ENCODE measurements at regions of chr16 and their contacts with region 1.

Region 1: GRCh38 chr16:19167710-19168370 is at the start of gene SYT17:
- DNase-seq: peak; percentile 36
- H3K4me3 Mint-ChIP-seq: no peak within 1 kb of the TSS
- H3K27ac Mint-ChIP-seq: no peak within 1 kb of the TSS
- H3K4me1 Mint-ChIP-seq: no peaks in the 10 kb centered on the region
- H3K27me3 Mint-ChIP-seq: peaks cover 9% of the 10 kb centered on the region
- total RNA-seq, gene SYT17: not detected

Region 2: GRCh38 chr16:19223235-19224170 is 55.7 kb after region 1 on chr16:
- CTCF ChIA-PET with region 1: no interaction called
- intact Hi-C with region 1: no loop called
- DNase-seq: peak; percentile 69
- H3K4me3 Mint-ChIP-seq: no peak overlapping the region
- H3K27ac Mint-ChIP-seq: no peak overlapping the region
- H3K4me1 Mint-ChIP-seq: no peaks in the 10 kb centered on the region
- H3K27me3 Mint-ChIP-seq: peaks cover 5% of the 10 kb centered on the region

Region 3: DNA sequence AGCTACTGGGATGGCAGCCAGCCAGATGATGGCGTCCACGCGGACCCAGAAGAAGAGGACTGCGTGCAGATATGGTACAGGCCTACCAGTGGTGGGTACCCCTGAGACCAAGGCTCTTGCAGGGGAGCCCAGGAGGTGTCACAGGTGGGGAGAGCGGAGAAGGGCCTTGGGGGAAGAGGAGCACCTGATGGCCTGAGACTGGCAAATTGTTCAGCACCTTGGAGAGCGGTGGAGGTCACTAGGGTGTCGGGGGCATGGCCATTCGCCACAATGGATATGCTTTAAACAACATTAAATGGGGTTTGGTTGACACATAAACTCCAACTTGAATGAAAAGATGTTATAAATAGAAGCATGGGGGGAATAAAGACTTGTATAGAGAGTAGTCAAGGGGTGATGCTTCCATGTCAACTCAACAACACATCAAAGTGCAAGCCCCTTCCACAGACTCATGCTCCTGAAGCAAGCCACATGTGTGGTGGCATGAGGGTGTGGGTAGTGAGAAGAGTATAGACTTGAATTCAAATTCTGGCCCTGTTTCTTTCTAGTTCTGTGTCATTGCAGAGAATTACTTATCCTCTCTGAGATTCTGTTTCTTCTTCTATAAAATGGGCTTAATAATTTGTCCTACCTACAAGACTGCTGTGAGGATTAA is 139.9 kb after region 1 on chr16:
- CTCF ChIA-PET with region 1: no interaction called
- intact Hi-C with region 1: no loop called
- DNase-seq: peak; percentile 23
- H3K4me3 Mint-ChIP-seq: no peak overlapping the region
- H3K27ac Mint-ChIP-seq: no peak overlapping the region
- H3K4me1 Mint-ChIP-seq: no peaks in the 10 kb centered on the region
- H3K27me3 Mint-ChIP-seq: peaks cover 8% of the 10 kb centered on the region

Region 4: DNA sequence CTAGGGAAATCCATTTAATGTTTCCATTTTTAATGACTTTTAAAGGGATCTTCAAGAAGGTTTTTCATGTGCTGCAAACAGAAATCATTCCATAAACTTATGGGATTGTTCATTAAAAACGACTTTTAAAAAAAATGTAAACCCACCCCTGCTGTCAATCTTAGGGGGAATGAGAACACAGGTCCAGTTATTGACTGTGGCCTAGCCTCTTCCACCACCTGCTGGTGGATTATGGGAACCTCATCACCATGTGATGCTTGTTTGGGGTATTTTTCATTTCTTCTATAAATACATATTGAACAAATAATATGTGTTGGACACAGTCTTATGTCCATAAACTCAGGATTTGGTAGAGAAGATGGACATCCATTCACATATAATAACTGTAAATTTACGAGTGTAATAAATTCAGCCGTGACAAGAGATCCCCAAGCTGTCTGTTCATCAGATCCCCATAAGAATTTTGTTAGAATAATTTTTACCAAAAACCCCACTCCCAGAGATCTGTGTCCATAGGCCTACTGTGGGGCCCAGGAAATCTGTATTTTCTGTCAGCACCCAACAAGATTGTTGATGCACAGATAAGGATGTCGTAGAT is 207.8 kb after region 1 on chr16:
- CTCF ChIA-PET with region 1: interaction called, 3 read pairs
- intact Hi-C with region 1: loop called (anchors 2 kb)
- DNase-seq: peak; percentile 54
- H3K4me3 Mint-ChIP-seq: no peak overlapping the region
- H3K27ac Mint-ChIP-seq: no peak overlapping the region
- H3K4me1 Mint-ChIP-seq: no peaks in the 10 kb centered on the region
- H3K27me3 Mint-ChIP-seq: no peaks in the 10 kb centered on the region

Region 5: DNA sequence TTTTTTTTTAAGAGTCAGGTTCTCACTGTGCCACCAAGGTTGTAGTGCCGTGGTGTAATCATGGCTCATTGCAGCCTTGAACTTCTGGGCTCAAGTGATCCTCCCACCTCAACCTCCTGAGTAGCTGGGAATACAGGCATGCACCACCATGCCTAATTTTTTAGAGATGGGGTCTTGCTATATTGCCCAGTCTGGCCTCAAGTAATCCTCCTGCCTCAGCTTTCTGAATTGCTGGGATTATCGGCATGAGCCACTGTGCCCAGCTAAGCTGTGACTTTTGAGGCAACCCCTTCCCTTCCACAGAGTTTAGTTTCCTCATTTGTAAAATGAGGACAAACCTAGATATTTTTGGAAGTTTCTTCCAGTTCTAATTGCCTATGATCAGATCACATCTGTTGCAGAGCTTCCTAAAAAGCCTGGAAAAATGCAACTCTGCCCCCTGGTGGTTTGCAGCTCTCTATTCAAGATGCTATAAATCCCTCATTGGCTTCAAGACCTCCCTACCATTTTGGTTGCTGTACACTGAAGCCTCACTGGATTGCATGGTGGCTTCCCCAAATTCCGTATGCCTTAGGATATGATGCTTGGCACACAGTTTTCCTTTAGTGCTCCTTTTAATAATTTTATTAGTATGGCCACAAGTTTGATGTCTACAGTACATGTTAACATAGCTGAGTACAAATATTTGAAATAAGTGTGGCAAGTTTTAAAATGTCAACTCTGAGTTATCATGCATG is 334.7 kb after region 1 on chr16:
- CTCF ChIA-PET with region 1: no interaction called
- intact Hi-C with region 1: loop called (anchors 5 kb)
- DNase-seq: peak; percentile 83
- H3K4me3 Mint-ChIP-seq: no peak overlapping the region
- H3K27ac Mint-ChIP-seq: no peak overlapping the region
- H3K4me1 Mint-ChIP-seq: no peaks in the 10 kb centered on the region
- H3K27me3 Mint-ChIP-seq: no peaks in the 10 kb centered on the region